ENCODE measurements at regions of chr4 and their contacts with region 1.

Region 1: GRCh38 chr4:47383829-47384427 is 79.6 kb downstream of the COMMD8 start:
- DNase-seq: no peak
- H3K4me3 ChIP-seq: no peak overlapping the region
- H3K27ac ChIP-seq: no peak overlapping the region
- H3K4me1 ChIP-seq: no peaks in the 10 kb centered on the region
- H3K27me3 ChIP-seq: no peaks in the 10 kb centered on the region
- CTCF ChIP-seq: peak in 5 of 11 experiments; percentile 16 to 42 (median 30)
- POLR2A ChIP-seq: no peak

Region 2: DNA sequence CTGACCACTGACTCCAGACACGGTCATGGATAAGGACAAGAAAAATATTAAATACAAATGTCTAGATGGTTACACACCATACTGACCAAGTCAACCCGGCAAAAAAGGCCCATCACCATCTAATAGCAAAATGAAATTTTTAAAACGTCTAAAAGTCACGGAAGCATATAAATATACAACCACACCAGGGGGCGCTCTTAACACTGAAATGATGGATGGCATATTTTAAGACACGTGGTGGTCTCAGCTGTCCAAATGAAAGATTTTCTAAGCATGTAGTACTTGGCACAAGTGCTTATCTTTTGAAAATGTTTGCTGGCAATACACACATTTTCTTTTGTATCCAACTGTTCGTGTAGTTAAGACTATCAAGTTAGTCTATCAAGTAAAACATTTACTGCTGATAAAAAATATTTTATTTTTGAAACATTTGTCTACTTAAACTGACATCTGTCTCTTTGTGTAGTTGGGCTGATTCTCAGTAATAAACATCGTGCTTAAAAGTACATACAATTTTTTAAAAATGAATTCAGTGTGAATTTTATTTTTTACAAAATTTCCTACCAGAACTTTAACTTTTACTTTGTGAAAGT is 539.5 kb before region 1 on chr4:
- intact Hi-C with region 1: loop called (anchors 10 kb)
- DNase-seq: no peak
- H3K4me3 ChIP-seq: no peak overlapping the region
- H3K27ac ChIP-seq: no peak overlapping the region
- H3K4me1 ChIP-seq: no peaks in the 10 kb centered on the region
- H3K27me3 ChIP-seq: no peaks in the 10 kb centered on the region
- CTCF ChIP-seq: peak in 8 of 11 experiments; percentile 21 to 56 (median 51)
- POLR2A ChIP-seq: no peak

Region 3: GRCh38 chr4:47442980-47443379 is 59.1 kb after region 1 on chr4:
- intact Hi-C with region 1: no loop called
- DNase-seq: no peak
- H3K4me3 ChIP-seq: no peak overlapping the region
- H3K27ac ChIP-seq: peak overlapping the region in 2 of 8 donors; percentile 22 to 40
- H3K4me1 ChIP-seq: peaks cover 0 to 17% (median 2%) of the 10 kb centered on the region in 6 donors
- H3K27me3 ChIP-seq: no peaks in the 10 kb centered on the region
- CTCF ChIP-seq: no peak
- POLR2A ChIP-seq: no peak

Measured in spleen (tissue), 13 donors.